PC-3 (cell line): ENCODE measurements at regions of chr5 and their contacts with region 1.

Region 1: GRCh38 chr5:55226027-55226933 is 835 bp downstream of the MCIDAS start:
- DNase-seq: peak; percentile 62
- ATAC-seq: peak; percentile 67
- H3K4me3 ChIP-seq: peak overlapping the region; percentile 76
- H3K27ac ChIP-seq: no peak overlapping the region
- H3K4me1 ChIP-seq: peaks cover 14% of the 10 kb centered on the region; the same call in 1 of the 2 replicates
- H3K27me3 ChIP-seq: no peaks in the 10 kb centered on the region
- CTCF ChIP-seq: peak; percentile 67

Region 2: GRCh38 chr5:55307383-55308253 is 81.3 kb after region 1 on chr5 and contains the starts of genes DHX29 and MTREX:
- CTCF ChIA-PET with region 1: no interaction called
- POLR2A ChIA-PET with region 1: no interaction called
- intact Hi-C with region 1: loop called (anchors 2 kb)
- DNase-seq: peak; percentile 73
- ATAC-seq: peak; percentile 90
- H3K4me3 ChIP-seq: peak within 1 kb of the TSS; percentile 82
- H3K27ac ChIP-seq: peak within 1 kb of the TSS; percentile 87
- H3K4me1 ChIP-seq: peaks cover 32% of the 10 kb centered on the region
- H3K27me3 ChIP-seq: no peaks in the 10 kb centered on the region
- CTCF ChIP-seq: no peak
- total RNA-seq, gene DHX29: 9.4 and 13.4 TPM in 2 replicates
- total RNA-seq, gene MTREX: 25.6 and 44.0 TPM in 2 replicates